A549 (cell line): ENCODE measurements at regions of chr11 and their contacts with region 1.

Region 1: GRCh38 chr11:111230122-111230465 is 15.4 kb upstream of the POU2AF2 start:
- DNase-seq: no peak
- ATAC-seq: peak; percentile 80 to 85
- H3K4me3 ChIP-seq: no peak overlapping the region; the same call in 2 of the 3 replicates
- H3K27ac ChIP-seq: no peak overlapping the region
- H3K4me1 ChIP-seq: no peaks in the 10 kb centered on the region
- CTCF ChIP-seq: no peak
- EP300 ChIP-seq: no peak
- POLR2A ChIP-seq: no peak
- RAD21 ChIP-seq: no peak

Region 2: DNA sequence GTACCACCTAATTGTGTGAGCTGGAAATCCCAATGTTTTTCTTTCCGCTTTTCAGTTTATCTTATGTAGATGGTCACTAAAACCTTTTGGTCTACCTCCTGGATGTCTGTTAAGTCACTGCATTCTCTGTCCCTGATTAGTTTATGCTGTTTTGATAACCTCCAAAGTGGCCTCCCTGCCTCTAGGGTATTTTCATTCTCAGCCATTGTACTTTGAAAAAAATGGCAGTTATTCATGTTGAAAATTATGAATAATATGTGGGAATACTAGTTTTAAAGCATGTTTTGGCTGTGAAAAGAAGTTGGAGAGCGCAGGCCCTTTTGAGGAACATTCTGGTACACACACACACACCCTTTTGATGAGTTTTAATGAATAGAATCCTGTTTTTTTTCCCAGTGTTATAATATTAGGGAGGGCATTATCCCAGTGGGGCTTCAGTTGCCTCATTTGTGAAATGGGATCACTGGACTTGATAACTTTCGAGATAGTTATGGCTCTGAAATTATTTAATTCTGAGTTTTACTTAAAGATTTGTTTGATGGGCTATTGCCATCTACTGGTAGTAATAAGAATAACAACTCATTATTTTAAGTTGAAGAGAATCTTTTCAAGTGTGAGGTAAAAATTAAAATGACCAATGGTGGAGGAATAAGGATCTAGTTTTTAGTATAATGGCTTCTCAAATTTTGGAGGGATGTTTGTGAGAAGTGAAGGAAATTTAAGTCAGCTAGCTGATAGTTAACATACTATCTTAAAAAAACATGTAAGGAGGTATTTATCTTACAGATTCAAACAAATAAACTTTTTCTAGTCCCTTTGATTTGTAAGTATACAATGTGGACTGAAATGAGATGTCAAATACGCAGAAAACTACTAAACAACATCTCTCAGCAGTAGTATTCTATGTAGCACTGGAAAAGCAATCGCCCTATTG is 796.4 kb before region 1 on chr11:
- CTCF ChIA-PET with region 1: interaction called, 11 read pairs
- POLR2A ChIA-PET with region 1: no interaction called
- DNase-seq: peak in 1 of 2 experiments; percentile 16
- ATAC-seq: no peak
- H3K4me3 ChIP-seq: no peak overlapping the region
- H3K27ac ChIP-seq: peak overlapping the region; percentile 12 to 61; a peak in 4 of 6 replicates
- H3K4me1 ChIP-seq: peaks cover 47% of the 10 kb centered on the region
- CTCF ChIP-seq: peak; percentile 60
- EP300 ChIP-seq: no peak
- POLR2A ChIP-seq: no peak
- RAD21 ChIP-seq: peak; percentile 41 to 58; a peak in 4 of 5 replicates

Region 3: GRCh38 chr11:110465231-110465630 is 764.9 kb before region 1 on chr11:
- CTCF ChIA-PET with region 1: interaction called, 10 read pairs
- POLR2A ChIA-PET with region 1: interaction called, 3 read pairs
- DNase-seq: no peak
- ATAC-seq: no peak
- H3K4me3 ChIP-seq: no peak overlapping the region
- H3K27ac ChIP-seq: no peak overlapping the region
- H3K4me1 ChIP-seq: no peaks in the 10 kb centered on the region
- CTCF ChIP-seq: no peak
- EP300 ChIP-seq: no peak
- POLR2A ChIP-seq: no peak
- RAD21 ChIP-seq: no peak

Region 4: DNA sequence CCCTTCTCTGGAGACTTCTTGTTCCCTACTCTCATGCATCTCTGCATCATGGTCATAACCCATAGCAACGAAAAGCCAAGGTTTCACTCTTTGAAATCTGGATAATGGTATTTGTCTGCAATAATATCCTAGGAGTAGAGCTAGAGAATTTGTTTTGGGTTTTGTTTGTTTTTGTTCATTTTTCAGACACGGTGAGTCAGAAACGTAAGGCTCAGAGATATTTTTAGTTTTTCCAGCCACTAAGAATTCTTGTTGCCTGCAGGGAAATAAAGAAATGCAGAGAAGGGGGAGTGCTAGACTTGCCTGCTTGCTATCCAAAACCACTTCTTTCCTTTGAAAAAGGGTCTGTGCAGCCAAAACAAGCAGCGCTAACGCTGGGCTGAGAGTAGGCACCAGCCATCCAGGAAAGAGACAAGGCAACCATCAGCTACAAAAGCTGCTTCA is 94.2 kb after region 1 on chr11:
- CTCF ChIA-PET with region 1: no interaction called
- POLR2A ChIA-PET with region 1: no interaction called
- DNase-seq: no peak
- ATAC-seq: no peak
- H3K4me3 ChIP-seq: no peak overlapping the region
- H3K27ac ChIP-seq: peak overlapping the region in 1 of 2 experiments; percentile 16; a peak in 1 of 6 replicates
- H3K4me1 ChIP-seq: peaks cover 19% of the 10 kb centered on the region; the same call in 2 of the 3 replicates
- CTCF ChIP-seq: no peak
- EP300 ChIP-seq: no peak
- POLR2A ChIP-seq: no peak
- RAD21 ChIP-seq: no peak